Right ventricle myocardium inferior (tissue), 1 donor: ENCODE measurements at regions of chr5 and their contacts with region 1.

Region 1: DNA sequence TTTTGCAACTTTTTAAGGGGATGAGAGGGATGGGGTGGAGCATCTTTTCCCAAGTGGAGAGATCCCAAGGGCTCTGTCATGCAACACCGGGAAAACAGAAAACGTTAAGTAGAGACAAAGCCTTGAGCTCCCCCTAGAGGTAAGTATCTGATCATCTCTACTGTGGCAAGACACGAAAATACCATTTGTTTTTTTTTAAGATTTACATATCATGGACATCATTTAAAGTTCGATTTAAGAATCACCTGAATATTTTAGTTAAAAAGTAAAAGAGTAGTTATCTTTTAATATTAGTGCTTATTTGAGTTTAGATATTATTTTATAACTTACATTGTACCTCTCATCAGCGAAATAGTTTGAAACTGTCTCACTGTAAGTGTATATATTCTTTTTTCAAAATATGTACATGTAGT is 200.4 kb downstream of the LRRC70 start:
- DNase-seq: no peak
- ATAC-seq: peak; percentile 86

Region 2: GRCh38 chr5:62448528-62448927 is 330.5 kb before region 1 on chr5:
- intact Hi-C with region 1: loop called (anchors 5 kb)
- DNase-seq: no peak
- ATAC-seq: no peak

Region 3: GRCh38 chr5:62460578-62460983 is 318.4 kb before region 1 on chr5:
- intact Hi-C with region 1: loop called (anchors 2 kb)
- DNase-seq: no peak
- ATAC-seq: no peak

Region 4: DNA sequence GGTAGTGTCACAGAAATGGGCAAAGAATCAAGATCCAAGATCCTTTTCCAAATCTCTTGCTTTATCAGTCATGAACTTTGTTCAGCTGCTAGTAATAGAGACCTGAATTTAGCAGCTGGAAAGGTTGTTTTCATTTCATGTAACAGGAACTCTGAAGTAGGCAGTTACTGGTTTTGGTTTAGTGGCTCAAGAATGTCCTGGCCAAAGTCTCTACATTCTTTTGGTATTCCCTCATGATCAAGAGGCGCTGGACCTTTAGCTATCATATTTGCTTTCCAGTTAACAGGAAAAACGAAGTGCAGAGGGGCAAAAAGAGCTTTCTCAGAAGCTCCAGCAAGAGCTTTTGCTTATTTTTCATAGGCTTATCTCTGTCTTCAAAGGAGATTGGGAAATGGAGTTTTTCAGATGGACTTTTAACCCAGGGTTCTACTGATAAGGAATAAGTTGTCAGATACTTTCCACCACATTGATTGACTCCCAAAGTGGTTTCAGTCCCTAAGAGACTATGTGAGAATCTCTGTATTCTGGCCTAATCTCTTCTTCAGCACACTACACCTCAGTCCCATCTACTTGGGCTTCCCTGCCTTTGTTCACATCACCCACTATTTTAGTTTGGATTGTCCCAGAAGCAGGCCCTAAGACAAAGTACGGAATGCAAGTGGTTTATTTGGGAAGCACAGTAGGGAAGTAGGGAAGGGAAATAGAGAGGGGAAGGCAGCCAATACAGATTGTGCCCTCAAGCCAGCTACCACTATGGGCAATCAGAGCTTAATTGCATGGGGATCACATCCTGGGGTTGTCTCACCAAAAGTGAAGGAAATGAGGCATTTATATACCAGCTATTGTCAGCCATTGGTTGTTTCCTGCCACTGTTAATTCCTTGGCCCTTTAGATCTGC is 158.9 kb after region 1 on chr5:
- intact Hi-C with region 1: no loop called
- DNase-seq: no peak
- ATAC-seq: peak; percentile 42